ENCODE measurements at regions of chr1 and their contacts with region 1.

Region 1: GRCh38 chr1:72037745-72038343 is 244.5 kb downstream of the NEGR1 start:
- DNase-seq: peak; percentile 47
- H3K4me3 ChIP-seq: no peak overlapping the region
- H3K27ac ChIP-seq: no peak overlapping the region
- H3K4me1 ChIP-seq: no peaks in the 10 kb centered on the region
- H3K27me3 ChIP-seq: no peaks in the 10 kb centered on the region
- CTCF ChIP-seq: peak; percentile 38 to 46
- POLR2A ChIP-seq: no peak

Region 2: DNA sequence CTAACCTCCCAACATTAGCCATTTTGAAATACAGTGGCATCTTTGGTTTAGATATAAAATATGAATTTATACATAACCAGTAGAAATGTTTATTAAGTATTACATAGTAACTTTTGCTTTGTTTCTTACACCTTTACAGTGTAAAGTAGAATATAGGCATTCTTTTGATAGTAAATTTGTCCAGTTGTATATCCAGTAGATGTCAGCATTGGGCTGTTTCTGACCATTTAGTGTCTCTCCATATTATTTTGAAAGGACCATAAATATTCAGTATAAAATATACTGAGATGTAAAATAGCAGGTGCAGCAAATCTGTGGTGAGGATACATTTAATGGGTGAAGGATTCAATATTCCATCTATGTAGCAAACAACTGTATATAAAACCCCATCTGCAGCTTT is 841.2 kb before region 1 on chr1:
- CTCF ChIA-PET with region 1: interaction called, 102 read pairs
- POLR2A ChIA-PET with region 1: no interaction called
- dilution Hi-C with region 1: no loop called
- intact Hi-C with region 1: loop called (anchors 2 kb)
- DNase-seq: peak; percentile 16
- H3K4me3 ChIP-seq: no peak overlapping the region
- H3K27ac ChIP-seq: no peak overlapping the region
- H3K4me1 ChIP-seq: no peaks in the 10 kb centered on the region
- H3K27me3 ChIP-seq: no peaks in the 10 kb centered on the region
- CTCF ChIP-seq: peak in 1 of 2 donors; percentile 8
- POLR2A ChIP-seq: no peak

Region 3: GRCh38 chr1:71587961-71588360 is 449.9 kb before region 1 on chr1:
- CTCF ChIA-PET with region 1: interaction called, 20 read pairs
- POLR2A ChIA-PET with region 1: no interaction called
- dilution Hi-C with region 1: no loop called
- intact Hi-C with region 1: loop called (anchors 1 kb)
- DNase-seq: peak; percentile 60
- H3K4me3 ChIP-seq: no peak overlapping the region
- H3K27ac ChIP-seq: no peak overlapping the region
- H3K4me1 ChIP-seq: no peaks in the 10 kb centered on the region
- H3K27me3 ChIP-seq: no peaks in the 10 kb centered on the region
- CTCF ChIP-seq: no peak
- POLR2A ChIP-seq: no peak

Region 4: GRCh38 chr1:72023063-72023930 is 14.5 kb before region 1 on chr1:
- CTCF ChIA-PET with region 1: interaction called, 42 read pairs
- POLR2A ChIA-PET with region 1: no interaction called
- dilution Hi-C with region 1: no loop called
- intact Hi-C with region 1: no loop called
- DNase-seq: no peak
- H3K4me3 ChIP-seq: no peak overlapping the region
- H3K27ac ChIP-seq: no peak overlapping the region
- H3K4me1 ChIP-seq: no peaks in the 10 kb centered on the region
- H3K27me3 ChIP-seq: no peaks in the 10 kb centered on the region
- CTCF ChIP-seq: no peak
- POLR2A ChIP-seq: no peak

Region 5: DNA sequence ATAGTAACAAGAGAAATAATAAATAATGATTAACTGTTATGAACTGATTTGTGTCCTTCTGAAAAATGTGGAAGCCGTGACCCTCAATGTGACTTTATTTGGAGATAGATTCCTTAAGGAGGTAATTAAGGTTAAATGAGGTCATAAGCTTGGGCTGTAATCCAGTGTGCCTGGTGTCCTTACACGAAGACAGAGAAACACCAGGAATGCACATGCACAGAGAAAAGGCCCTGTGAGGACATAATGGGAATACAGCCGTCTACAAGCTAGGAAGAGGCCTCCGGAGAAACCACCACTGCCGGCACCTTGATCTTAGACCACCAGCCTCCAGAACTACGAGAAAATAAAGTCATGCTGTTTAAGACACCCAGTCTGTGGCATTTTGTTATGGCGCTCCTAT is 28.6 kb after region 1 on chr1:
- CTCF ChIA-PET with region 1: interaction called, 11 read pairs
- POLR2A ChIA-PET with region 1: no interaction called
- dilution Hi-C with region 1: no loop called
- intact Hi-C with region 1: no loop called
- DNase-seq: no peak
- H3K4me3 ChIP-seq: no peak overlapping the region
- H3K27ac ChIP-seq: no peak overlapping the region
- H3K4me1 ChIP-seq: no peaks in the 10 kb centered on the region
- H3K27me3 ChIP-seq: no peaks in the 10 kb centered on the region
- CTCF ChIP-seq: no peak
- POLR2A ChIP-seq: no peak

Measured in endothelial cell of umbilical vein (primary cell).